GM13977 (cell line): ENCODE measurements at regions of chr7 and their contacts with region 1.

Region 1: GRCh38 chr7:104643587-104644217 is 315.3 kb downstream of the LHFPL3 start:
- DNase-seq: peak; percentile 16
- CTCF ChIP-seq: peak; percentile 47

Region 2: GRCh38 chr7:104569700-104570099 is 74.0 kb before region 1 on chr7:
- in situ Hi-C with region 1: no loop called
- DNase-seq: no peak
- CTCF ChIP-seq: no peak

Region 3: DNA sequence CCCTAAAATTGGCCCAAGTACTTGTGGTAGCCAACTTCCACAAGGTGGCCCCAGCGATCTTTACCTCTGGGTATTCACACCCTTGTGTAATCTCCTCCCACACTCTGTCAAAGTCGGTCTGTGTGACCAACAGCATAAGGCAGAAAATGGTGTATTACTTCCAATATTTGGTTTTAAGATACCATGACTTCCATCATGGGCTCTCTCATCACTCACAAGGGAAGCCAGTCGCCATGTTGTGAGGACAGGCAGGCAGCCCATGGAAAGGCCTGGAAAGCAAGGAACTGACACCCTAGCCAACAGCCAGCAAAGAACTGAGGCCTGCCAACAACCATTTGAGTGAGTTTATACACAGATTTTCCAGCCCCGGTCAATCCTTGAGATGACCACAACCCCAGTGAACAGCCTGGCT is 279.3 kb after region 1 on chr7:
- in situ Hi-C with region 1: loop called (anchors 25 kb)
- DNase-seq: peak; percentile 63
- CTCF ChIP-seq: peak; percentile 87